Pancreas (tissue), 10 donors: ENCODE measurements at regions of chr6 and their contacts with region 1.

Region 1: GRCh38 chr6:163170294-163170883 is 244.1 kb upstream of the QKI start:
- DNase-seq: no peak
- ATAC-seq: no peak
- H3K4me3 ChIP-seq: no peak overlapping the region
- H3K27ac ChIP-seq: no peak overlapping the region
- H3K4me1 ChIP-seq: no peaks in the 10 kb centered on the region
- H3K27me3 ChIP-seq: no peaks in the 10 kb centered on the region
- CTCF ChIP-seq: peak; percentile 29 to 47 (median 36)

Region 2: GRCh38 chr6:162727309-162728182 is 442.8 kb before region 1 on chr6 and contains the starts of genes PACRG and PRKN:
- intact Hi-C with region 1: no loop called
- DNase-seq: peak; percentile 99 to 100 (median 100)
- ATAC-seq: peak; percentile 95 to 99 (median 97)
- H3K4me3 ChIP-seq: peak within 1 kb of the TSS; percentile 21 to 72 (median 62)
- H3K27ac ChIP-seq: peak within 1 kb of the TSS; percentile 90 to 97 (median 94)
- H3K4me1 ChIP-seq: peaks cover 8 to 13% (median 12%) of the 10 kb centered on the region in 3 donors
- H3K27me3 ChIP-seq: no peaks in the 10 kb centered on the region
- CTCF ChIP-seq: no peak
- total RNA-seq, gene PACRG: 2.5 to 6.9 (median 3.2) TPM
- total RNA-seq, gene PRKN: 1.7 to 5.2 (median 2.9) TPM

Region 3: GRCh38 chr6:164927288-164928056 is 1757.1 kb after region 1 on chr6:
- intact Hi-C with region 1: loop called in 1 of 3 experiments (anchors 10 kb)
- DNase-seq: peak; percentile 25 to 90 (median 69)
- ATAC-seq: peak; percentile 79 to 96 (median 94)
- H3K4me3 ChIP-seq: no peak overlapping the region
- H3K27ac ChIP-seq: no peak overlapping the region
- H3K4me1 ChIP-seq: no peaks in the 10 kb centered on the region
- H3K27me3 ChIP-seq: no peaks in the 10 kb centered on the region
- CTCF ChIP-seq: peak; percentile 70 to 98 (median 90)